ENCODE measurements at regions of chr3 and their contacts with region 1.

Region 1: GRCh38 chr3:52231502-52232293 is 6.3 kb upstream of the TLR9 start:
- DNase-seq: peak; percentile 54
- H3K4me3 ChIP-seq: no peak overlapping the region
- H3K27ac ChIP-seq: no peak overlapping the region
- H3K4me1 ChIP-seq: no peaks in the 10 kb centered on the region
- H3K27me3 ChIP-seq: no peaks in the 10 kb centered on the region
- CTCF ChIP-seq: peak; percentile 98
- POLR2A ChIP-seq: peak; percentile 36

Region 2: GRCh38 chr3:52248816-52249547 is 17.3 kb after region 1 on chr3:
- CTCF ChIA-PET with region 1: interaction called, 12 read pairs
- POLR2A ChIA-PET with region 1: no interaction called
- dilution Hi-C with region 1: no loop called
- intact Hi-C with region 1: no loop called
- DNase-seq: peak; percentile 38
- H3K4me3 ChIP-seq: no peak overlapping the region
- H3K27ac ChIP-seq: no peak overlapping the region
- H3K4me1 ChIP-seq: peaks cover 23% of the 10 kb centered on the region
- H3K27me3 ChIP-seq: no peaks in the 10 kb centered on the region
- CTCF ChIP-seq: no peak
- POLR2A ChIP-seq: no peak

Region 3: DNA sequence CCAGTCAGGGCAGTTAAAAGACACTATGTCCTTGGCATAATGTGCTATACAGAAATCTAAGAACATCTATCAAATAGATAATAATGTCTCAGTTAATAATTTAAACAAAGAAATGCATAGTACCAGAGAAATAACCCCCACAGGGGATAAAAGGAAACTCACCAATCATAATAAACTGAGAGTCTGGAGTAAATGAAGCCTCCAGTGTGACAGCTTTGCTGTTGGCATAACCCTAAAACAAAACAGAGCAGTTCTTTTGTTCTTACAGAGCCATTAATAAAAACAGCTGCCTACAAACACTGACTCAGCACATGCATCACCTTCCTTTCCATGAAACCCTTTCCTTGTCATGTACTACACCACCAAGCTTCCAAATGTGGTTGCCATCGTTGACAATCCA is 27.3 kb after region 1 on chr3:
- CTCF ChIA-PET with region 1: interaction called, 16 read pairs
- POLR2A ChIA-PET with region 1: interaction called, 5 read pairs
- dilution Hi-C with region 1: no loop called
- intact Hi-C with region 1: no loop called
- DNase-seq: peak; percentile 73
- H3K4me3 ChIP-seq: no peak overlapping the region
- H3K27ac ChIP-seq: peak overlapping the region; percentile 54
- H3K4me1 ChIP-seq: peaks cover 15% of the 10 kb centered on the region
- H3K27me3 ChIP-seq: no peaks in the 10 kb centered on the region
- CTCF ChIP-seq: no peak
- POLR2A ChIP-seq: no peak

Region 4: DNA sequence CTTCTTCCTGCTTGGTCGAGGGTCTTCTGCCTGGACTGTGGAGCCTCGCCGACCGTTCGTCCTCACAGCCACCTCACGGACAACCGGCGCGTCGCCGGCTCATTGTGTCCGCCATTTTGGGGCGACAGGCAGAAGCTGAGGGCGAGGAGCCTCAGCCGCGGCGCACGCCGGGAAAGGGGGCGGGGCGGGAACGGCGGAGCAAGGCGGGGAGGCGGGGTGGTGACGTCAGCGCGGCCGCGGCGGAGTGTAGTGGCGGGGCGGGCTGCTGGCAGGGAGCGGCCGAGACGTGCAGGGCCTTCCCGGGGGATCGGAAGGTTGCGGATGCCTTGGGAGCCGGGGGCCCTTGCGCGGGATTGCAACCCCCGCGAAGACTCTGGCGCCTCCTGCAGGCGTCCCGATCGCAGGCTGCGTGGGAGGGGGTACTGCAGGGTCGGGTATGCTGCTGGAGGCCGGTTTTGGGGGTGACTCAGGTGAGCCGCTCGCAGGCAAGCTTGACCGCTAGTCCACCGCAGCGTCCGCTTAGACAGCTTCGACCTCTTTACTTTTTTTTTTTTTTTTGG is 46.9 kb after region 1 on chr3 and contains the start of gene WDR82:
- CTCF ChIA-PET with region 1: interaction called, 49 read pairs
- POLR2A ChIA-PET with region 1: no interaction called
- dilution Hi-C with region 1: no loop called
- intact Hi-C with region 1: no loop called
- DNase-seq: peak; percentile 94
- H3K4me3 ChIP-seq: peak within 1 kb of the TSS; percentile 53 to 96 (median 87)
- H3K27ac ChIP-seq: peak within 1 kb of the TSS; percentile 62
- H3K4me1 ChIP-seq: peaks cover 34% of the 10 kb centered on the region
- H3K27me3 ChIP-seq: no peaks in the 10 kb centered on the region
- CTCF ChIP-seq: peak; percentile 35 to 57
- POLR2A ChIP-seq: peak; percentile 95
- total RNA-seq, gene WDR82: 71.3 and 71.8 TPM in 2 replicates

Region 5: GRCh38 chr3:52385157-52385556 is 153.5 kb after region 1 on chr3:
- CTCF ChIA-PET with region 1: interaction called, 15 read pairs
- POLR2A ChIA-PET with region 1: no interaction called
- dilution Hi-C with region 1: no loop called
- intact Hi-C with region 1: no loop called
- DNase-seq: peak; percentile 26
- H3K4me3 ChIP-seq: no peak overlapping the region
- H3K27ac ChIP-seq: no peak overlapping the region
- H3K4me1 ChIP-seq: no peaks in the 10 kb centered on the region
- H3K27me3 ChIP-seq: no peaks in the 10 kb centered on the region
- CTCF ChIP-seq: peak; percentile 50 to 64
- POLR2A ChIP-seq: no peak

Measured in endothelial cell of umbilical vein (primary cell).